Left cardiac atrium (tissue), 4 donors: ENCODE measurements at regions of chr7 and their contacts with region 1.

Region 1: GRCh38 chr7:64562626-64563275 is at the start of gene ZNF680:
- DNase-seq: peak; percentile 97
- ATAC-seq: peak; percentile 98
- total RNA-seq, gene ZNF680: 17.9 to 20.7 TPM

Region 2: GRCh38 chr7:64515330-64515729 is 47.4 kb before region 1 on chr7:
- intact Hi-C with region 1: loop called in 1 of 2 experiments (anchors 10 kb)
- DNase-seq: no peak
- ATAC-seq: no peak